ENCODE measurements at regions of chr3 and their contacts with region 1.

Region 1: GRCh38 chr3:150721285-150722130 is 17.8 kb upstream of the ERICH6 start:
- DNase-seq: no peak
- H3K4me3 ChIP-seq: no peak overlapping the region
- H3K27ac ChIP-seq: no peak overlapping the region
- H3K4me1 ChIP-seq: peaks cover 4% of the 10 kb centered on the region
- H3K27me3 ChIP-seq: no peaks in the 10 kb centered on the region
- CTCF ChIP-seq: peak; percentile 71

Region 2: DNA sequence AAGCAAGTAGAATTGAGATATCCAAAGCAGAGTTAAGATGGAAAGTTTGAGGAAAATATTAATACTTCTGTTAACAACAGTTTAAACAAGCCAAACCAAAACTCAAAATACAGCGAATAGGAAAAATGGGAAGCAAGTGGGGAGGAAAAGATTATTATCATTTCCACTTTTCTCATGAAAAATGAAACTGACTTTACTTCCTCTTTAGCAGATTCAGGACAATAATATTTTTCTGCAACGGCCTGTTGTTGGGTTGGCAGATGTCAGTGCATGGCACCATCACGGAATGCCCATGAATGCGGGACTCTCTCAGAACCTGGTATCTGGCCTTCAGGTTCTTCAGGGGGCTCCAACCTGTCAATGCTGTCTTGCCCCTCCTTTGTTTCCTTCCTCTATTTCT is 940.3 kb before region 1 on chr3:
- intact Hi-C with region 1: no loop called
- DNase-seq: no peak
- H3K4me3 ChIP-seq: no peak overlapping the region
- H3K27ac ChIP-seq: no peak overlapping the region
- H3K4me1 ChIP-seq: no peaks in the 10 kb centered on the region
- H3K27me3 ChIP-seq: no peaks in the 10 kb centered on the region
- CTCF ChIP-seq: no peak

Region 3: DNA sequence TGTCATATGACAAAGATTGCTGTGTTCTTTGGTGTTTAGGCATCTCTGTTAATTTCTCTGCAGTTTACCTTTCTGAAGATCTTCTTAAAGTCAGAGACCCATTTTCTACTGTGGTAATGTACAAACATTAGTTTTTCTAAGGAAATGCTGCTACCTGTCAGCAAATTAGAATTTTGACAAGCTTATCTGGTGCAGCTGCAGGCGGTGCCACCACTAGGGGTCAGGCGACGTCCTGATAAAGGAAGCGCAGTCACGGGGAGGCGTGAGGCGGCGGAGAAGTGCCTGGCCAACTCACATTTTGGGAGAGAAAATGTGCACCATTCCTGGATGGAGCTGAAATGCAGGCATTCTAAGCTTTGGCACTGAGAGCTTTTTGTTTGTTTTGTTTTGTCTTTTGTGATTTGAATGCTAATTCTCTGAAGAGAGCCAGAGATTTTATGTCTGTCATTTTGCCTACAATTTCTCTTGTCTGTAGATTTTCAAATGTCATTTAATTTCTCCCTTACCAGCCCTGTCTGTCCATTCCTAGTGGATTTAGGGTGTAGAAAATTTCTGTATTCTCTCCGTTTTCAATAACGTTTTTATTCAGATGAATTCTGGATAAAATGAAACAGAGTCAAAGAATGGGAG is 66.3 kb after region 1 on chr3:
- intact Hi-C with region 1: loop called (anchors 5 kb)
- DNase-seq: peak; percentile 86
- H3K4me3 ChIP-seq: no peak overlapping the region
- H3K27ac ChIP-seq: no peak overlapping the region
- H3K4me1 ChIP-seq: no peaks in the 10 kb centered on the region
- H3K27me3 ChIP-seq: no peaks in the 10 kb centered on the region
- CTCF ChIP-seq: peak; percentile 86

Region 4: DNA sequence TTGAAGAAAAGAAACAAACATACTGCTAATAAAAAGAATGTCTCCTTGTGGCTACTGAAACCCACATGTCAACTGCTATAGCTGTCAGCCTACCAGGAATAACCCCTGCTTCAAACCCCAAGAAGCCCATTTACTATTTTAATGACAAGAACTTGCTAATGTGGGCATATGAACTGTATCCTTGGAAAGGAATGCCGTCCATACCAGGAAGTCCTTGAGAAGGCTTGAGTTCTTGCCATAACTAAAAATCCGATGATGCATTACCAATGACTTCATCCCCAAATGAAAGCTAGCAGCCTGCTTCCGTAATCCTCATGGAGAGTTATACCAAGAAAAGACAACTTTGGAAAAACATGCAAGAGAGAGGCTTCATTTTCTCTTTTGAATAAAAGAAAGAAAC is 148.9 kb after region 1 on chr3:
- intact Hi-C with region 1: loop called (anchors 2 kb)
- DNase-seq: no peak
- H3K4me3 ChIP-seq: no peak overlapping the region
- H3K27ac ChIP-seq: no peak overlapping the region
- H3K4me1 ChIP-seq: no peaks in the 10 kb centered on the region
- H3K27me3 ChIP-seq: no peaks in the 10 kb centered on the region
- CTCF ChIP-seq: no peak

Region 5: DNA sequence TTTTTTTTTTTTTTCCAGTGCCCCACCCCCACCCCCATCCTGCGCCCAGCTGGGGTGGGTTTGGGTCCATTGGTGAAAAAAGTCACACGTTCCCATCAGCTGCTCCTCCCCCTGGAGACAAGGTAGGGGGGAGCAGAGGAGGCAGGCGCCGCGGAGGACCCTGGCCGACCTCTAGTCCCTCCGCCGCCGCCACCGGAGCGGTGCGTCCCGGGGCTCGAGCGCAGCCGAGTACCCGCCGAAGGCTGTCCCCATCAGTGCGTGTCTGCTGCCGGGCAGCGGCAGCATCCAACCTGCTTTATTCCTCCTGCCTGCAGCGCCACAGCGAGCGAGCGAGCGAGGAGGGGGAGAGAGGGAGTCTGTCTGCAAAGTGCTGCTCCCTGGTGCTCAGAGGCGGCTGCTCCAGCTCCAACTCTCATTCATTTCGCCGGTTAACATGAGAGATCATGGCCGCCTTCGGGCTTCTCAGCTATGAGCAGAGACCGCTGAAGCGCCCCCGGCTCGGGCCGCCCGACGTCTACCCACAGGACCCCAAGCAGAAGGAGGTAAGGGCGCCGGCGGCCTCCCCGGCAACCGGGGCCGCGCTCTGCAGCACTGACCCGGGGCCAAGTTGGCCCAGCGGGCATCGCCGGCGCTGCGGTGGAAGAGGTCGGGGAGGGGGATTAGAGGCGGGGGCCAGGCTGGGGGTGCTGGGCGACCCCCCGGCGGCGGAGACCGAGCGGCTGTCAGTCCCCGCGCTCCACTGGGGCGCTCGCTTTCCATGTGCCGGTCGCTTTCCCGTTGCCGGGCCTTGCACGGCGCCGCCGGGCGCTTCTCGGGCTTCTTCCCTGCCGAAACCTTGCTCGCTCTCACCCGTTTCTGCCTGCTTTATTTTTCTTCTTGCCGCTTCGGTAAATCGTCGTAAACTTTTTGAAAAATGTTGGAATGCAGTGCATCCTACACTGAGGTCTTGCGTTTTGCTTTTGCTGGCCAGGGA is 365.3 kb after region 1 on chr3:
- intact Hi-C with region 1: loop called (anchors 10 kb)
- DNase-seq: peak; percentile 59
- H3K4me3 ChIP-seq: peak overlapping the region; percentile 57
- H3K27ac ChIP-seq: no peak overlapping the region
- H3K4me1 ChIP-seq: peaks cover 7% of the 10 kb centered on the region
- H3K27me3 ChIP-seq: peaks cover 30% of the 10 kb centered on the region
- CTCF ChIP-seq: no peak

Region 6: GRCh38 chr3:151146071-151146730 is 424.7 kb after region 1 on chr3:
- intact Hi-C with region 1: loop called (anchors 5 kb)
- DNase-seq: peak; percentile 78
- H3K4me3 ChIP-seq: no peak overlapping the region
- H3K27ac ChIP-seq: no peak overlapping the region
- H3K4me1 ChIP-seq: peaks cover 6% of the 10 kb centered on the region
- H3K27me3 ChIP-seq: no peaks in the 10 kb centered on the region
- CTCF ChIP-seq: peak; percentile 90